Posterior vena cava (tissue), 2 donors: ENCODE measurements at regions of chr2 and their contacts with region 1.

Region 1: DNA sequence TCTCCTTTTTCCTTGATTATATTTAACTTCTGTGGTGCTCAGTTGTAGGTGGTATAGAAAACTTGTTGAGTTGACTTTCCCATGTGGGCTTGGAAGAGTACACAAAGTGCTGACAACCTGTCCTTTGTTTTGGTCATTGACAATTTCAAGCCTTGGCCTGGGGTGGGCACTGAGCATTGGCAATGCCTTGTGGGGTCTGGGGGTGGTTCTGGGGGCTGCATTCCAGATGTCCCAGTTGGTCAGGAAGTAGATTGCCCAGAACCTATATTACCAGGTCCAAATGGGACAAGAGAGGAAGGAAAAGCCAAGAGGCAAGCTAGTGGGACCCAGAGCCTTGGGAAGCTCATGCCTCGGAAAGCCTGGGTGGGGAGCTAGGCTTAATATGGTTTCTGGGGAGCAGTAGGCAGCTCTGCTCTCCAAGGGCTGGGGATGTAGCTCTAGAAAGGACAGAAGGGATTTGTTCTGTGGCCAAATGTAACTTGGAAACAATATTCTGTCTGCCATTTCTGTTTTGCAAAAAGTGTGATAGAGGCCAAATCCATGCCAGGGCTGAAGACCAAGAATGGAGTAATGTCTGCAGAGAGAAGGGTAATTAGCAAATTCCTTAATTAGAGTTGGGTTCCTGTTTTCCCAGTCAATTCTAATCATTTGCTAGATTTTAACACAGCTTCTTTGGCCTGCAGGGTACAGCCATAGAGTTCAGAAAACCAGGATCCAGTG is 87.4 kb downstream of the SLC4A3 start:
- DNase-seq: no peak

Region 2: DNA sequence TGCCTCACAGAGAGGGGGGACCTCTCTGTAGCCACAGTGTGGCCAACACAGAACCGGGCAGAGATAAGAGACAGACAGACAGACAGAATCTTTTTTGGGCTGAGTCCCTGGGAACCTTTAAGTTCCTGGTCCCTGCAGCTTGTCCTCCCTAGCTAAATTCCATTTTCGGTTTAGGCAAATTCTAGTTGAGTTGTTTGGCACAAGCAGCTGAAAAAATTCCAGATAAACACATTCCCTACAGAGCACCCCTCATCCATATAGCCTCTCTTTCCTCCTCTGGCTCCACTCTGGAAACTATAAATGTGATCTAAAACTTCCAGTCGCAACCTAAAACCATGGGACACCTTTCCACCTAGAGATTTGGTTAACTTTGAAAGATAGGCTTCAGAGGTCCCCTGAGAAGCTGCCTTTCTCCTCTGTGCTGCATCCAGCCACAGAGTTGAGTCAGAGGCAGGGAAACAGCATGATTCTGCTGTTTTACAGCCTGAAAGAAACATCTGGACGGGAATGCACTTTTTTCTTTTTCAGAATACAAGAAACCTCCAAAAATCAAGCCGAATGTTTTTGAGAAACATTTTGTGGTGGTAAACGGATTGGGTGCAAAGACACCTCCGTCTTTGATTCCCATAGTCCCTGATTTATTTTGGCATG is 56.5 kb before region 1 on chr2:
- intact Hi-C with region 1: loop called in 1 of 2 experiments (anchors 2 kb)
- DNase-seq: no peak

Region 3: DNA sequence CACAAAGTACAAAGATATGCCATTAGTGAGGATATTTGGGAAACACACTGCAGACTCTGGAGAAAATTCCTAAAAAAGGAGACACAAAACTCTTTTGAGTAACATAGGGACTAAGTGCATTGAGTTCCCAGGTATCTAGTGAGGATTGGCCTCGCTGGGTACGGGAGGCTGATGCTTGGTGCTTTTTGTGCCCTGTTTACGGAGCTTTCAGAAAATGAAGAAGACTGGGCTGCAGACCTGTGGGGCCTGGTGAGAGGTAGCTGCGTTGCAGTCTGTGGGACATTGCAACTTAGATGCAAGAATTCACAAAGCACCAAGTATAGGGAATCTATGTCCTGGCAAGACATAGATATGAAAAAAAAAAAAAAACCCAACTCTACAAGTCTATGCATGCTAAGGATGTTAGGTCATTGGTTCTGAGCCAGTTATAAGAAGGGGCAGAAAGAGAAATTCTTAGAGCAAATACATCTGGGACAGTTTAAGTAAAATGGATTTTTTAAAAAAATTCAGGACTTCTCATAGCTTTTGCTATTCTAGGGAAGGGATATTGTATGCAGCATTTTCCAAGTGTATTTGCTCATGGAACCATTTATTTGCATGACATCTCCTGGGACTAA is 68.6 kb after region 1 on chr2:
- intact Hi-C with region 1: no loop called
- DNase-seq: no peak

Region 4: DNA sequence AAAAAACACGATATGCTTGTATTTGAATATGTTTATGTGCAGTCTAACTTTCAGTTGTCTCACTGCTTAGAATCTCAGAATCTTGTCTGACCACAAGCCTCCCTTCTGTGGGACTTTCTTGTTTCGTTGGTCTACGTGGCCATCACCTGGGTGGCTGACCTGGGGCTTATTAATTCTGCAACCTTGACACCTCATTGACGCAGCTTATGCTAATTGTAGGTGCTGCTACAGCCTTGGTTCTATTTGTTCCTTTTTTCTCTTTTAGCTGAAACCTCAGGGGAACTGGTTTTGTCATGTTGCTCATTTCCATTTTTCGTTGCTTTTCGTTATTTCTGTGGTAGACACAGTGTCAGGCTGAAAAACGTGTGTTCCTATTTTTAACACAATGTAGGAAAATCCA is 186.3 kb after region 1 on chr2:
- intact Hi-C with region 1: no loop called
- DNase-seq: no peak

Region 5: DNA sequence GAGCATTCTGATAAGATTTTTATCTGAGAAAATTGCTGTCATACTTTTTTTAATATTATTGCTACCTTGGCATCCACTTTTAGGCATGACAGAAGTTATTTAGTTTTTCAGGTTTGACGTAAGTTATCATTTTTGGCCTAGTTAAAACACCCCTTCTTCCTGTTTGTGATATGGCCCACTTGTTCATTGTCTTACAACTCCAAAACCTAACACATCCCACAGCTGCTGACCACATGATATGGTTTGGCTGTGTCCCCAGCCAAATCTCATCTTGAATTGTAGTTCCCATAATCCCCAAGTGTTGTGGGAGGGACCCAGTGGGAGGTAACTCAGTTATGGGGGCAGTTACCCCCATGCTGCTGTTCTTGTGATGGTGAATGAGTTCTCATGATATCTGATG is 300.7 kb after region 1 on chr2:
- intact Hi-C with region 1: no loop called
- DNase-seq: no peak